Right cardiac atrium (tissue), 5 donors: ENCODE measurements at regions of chr12 and their contacts with region 1.

Region 1: GRCh38 chr12:92551853-92552397 is 150.9 kb upstream of the PLEKHG7 start:
- DNase-seq: no peak
- ATAC-seq: no peak
- H3K4me3 ChIP-seq: no peak overlapping the region
- H3K27ac ChIP-seq: peak overlapping the region; percentile 20
- H3K4me1 ChIP-seq: peaks cover 16% of the 10 kb centered on the region
- H3K27me3 ChIP-seq: no peaks in the 10 kb centered on the region

Region 2: GRCh38 chr12:92414170-92415070 is 137.5 kb before region 1 on chr12:
- intact Hi-C with region 1: loop called in 2 of 4 experiments (anchors 10 kb)
- DNase-seq: no peak
- ATAC-seq: no peak
- H3K4me3 ChIP-seq: no peak overlapping the region
- H3K27ac ChIP-seq: no peak overlapping the region
- H3K4me1 ChIP-seq: peaks cover 5% of the 10 kb centered on the region
- H3K27me3 ChIP-seq: no peaks in the 10 kb centered on the region

Region 3: DNA sequence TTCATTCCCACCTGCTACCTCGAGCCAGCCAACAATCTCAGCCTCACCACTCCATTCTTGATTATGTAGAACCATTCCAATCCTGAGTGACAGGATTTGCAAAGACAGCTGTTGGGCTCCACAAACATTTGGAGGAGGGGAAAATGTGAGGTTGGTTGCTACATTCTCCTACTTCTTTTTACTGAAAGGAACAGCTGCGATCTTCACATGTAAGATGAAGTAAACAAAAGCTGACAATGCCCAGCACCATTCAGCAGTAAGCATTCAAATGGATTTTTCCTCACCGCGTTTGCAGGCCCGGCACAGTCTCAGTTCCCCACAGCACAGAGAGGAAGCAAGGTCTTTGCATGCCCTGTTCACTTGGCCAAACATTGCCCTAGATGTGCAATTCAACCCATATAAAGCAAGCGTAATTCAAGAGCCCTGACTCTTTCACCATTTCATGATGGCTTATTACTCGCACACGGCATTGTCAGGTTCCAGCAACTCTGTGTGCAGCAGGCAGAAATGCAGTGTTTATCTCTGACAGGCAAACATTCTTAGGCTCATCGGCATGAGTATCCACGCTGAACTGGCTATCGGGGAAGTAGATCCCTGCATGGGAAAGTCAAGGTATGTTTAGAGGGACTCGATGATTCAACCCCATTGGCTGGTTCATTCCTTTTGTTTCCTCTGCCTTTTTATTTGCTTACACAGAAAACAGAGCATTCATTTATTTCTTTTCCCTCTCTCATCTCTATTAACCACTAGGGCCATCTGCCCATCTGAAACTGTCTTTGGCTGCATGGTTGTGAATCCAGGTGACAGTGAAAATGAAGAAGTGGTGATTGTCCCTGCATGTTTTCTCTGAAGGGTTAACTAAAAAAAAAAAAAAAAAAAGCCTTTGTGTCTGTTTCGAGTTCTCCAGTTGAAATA is 85.3 kb before region 1 on chr12:
- intact Hi-C with region 1: loop called in 1 of 4 experiments (anchors 5 kb)
- DNase-seq: peak in 1 of 3 donors; percentile 53
- ATAC-seq: peak; percentile 18 to 24
- H3K4me3 ChIP-seq: peak overlapping the region; percentile 13
- H3K27ac ChIP-seq: peak overlapping the region; percentile 92
- H3K4me1 ChIP-seq: peaks cover 7% of the 10 kb centered on the region
- H3K27me3 ChIP-seq: no peaks in the 10 kb centered on the region

Region 4: GRCh38 chr12:92505254-92506231 is 46.4 kb before region 1 on chr12:
- intact Hi-C with region 1: loop called in 2 of 4 experiments (anchors 10 kb)
- DNase-seq: peak; percentile 73 to 84 (median 83)
- ATAC-seq: peak; percentile 81 to 83
- H3K4me3 ChIP-seq: peak overlapping the region; percentile 18
- H3K27ac ChIP-seq: peak overlapping the region; percentile 80
- H3K4me1 ChIP-seq: peaks cover 14% of the 10 kb centered on the region
- H3K27me3 ChIP-seq: no peaks in the 10 kb centered on the region

Region 5: DNA sequence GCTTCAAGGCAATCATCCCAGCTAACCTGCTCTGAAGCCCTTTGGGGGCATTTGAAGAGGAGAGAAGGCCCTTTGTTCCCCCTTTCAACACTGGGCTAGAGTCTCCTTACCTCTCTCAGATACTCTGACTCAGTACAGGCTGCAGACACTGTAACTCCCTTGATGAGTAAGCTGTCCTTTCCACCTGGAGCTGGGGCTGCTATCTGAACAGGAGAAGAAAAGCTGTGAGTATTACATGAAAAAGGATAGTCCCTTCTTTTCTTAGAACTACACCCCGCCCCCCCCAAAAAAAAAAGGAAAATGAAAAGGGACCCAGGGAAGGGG is 35.7 kb before region 1 on chr12:
- intact Hi-C with region 1: no loop called
- DNase-seq: no peak
- ATAC-seq: no peak
- H3K4me3 ChIP-seq: no peak overlapping the region
- H3K27ac ChIP-seq: no peak overlapping the region
- H3K4me1 ChIP-seq: no peaks in the 10 kb centered on the region
- H3K27me3 ChIP-seq: no peaks in the 10 kb centered on the region